Activated B cell treated with CpG ODN at 0.5 μM for 24 hours (primary cell): ENCODE measurements at regions of chr2 and their contacts with region 1.

Region 1: DNA sequence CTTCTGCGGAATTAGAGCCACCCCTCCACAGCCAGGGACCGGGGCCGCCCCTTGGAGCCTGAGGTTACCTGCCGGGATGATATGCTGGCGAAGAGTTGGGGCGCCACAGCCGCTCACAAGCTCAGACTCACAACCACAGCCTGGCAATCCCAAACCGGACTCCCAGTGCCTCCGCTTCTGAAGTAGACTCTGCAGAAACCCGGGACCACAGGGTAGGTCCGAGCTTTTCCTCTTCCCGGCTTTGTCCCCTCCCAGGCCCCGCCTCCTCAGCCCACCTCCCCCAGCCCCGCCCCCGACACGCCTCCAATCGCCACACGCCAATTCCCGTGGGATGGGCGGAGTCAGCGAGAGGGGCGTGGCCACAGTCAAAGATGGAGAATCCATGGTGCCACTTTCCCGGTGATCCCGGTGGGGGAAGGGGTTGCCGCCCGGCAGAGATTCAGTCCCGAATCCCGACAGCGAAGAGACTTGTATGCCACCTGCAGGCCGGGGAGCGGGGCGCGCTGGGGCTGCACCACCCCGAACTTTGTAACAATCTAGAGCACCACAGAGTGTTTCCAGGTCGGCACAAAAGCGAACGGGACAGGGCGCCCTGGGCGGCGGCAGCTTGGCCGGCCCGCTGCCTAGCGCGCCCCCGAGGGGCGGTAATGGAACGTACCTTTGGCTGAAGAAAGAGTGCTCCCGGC is at the start of gene IDH1:
- DNase-seq: peak; percentile 99
- ATAC-seq: peak; percentile 79
- H3K4me3 Mint-ChIP-seq: peak within 1 kb of the TSS; percentile 100
- H3K27ac Mint-ChIP-seq: peak within 1 kb of the TSS; percentile 88
- H3K4me1 Mint-ChIP-seq: peaks cover 48% of the 10 kb centered on the region
- H3K27me3 Mint-ChIP-seq: no peaks in the 10 kb centered on the region
- CTCF ChIP-seq: no peak
- total RNA-seq, gene IDH1: 36.9 and 46.6 TPM in 2 replicates

Region 2: DNA sequence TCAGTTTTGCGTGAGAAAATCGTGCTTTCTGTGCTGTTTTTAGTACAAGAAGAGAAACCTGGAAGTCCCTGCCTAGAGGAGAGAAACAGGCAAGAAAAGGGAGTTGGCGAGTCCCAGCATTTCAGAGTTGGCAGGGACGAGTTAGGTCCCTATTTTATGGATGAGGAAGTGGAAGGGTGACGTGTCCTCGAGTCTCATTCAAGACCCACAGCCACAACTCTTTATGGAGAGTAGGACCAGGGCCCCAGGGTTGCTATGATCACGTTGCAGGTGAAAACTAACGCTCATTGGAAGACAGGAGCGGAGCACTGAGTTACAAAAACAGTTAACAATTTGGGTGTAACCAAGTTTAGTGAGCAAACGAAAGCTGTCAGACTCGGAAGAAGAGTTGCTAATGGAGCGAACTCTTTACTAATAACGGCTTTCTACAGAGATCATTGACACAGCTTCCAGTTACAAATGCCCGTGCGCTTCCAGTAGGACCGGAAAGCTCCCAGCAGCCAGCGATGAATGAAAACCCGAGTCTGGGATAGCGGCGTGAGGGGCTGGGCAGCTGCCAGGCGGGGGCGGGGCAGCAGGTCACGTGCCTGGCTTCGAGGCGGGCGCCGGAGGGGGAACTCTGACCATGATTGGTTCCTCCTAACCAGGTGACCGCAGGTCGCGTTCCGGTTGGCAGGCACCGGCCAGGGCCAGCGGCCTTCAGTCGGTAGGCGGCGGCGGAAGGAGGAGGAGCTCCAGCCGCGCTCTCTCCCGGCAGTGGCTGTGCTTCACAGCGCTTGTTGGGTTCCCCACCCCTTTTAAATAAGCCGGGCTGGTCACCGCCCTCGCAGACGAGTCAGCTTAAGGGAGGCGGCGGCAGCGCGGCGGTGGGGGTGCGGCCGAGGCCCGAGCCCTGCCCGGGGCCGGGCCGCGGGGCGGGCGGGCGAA is 543.9 kb before region 1 on chr2 and contains the start of gene CCNYL1:
- CTCF ChIA-PET with region 1: no interaction called
- POLR2A ChIA-PET with region 1: no interaction called
- intact Hi-C with region 1: loop called (anchors 1 kb)
- DNase-seq: peak; percentile 92
- ATAC-seq: peak; percentile 95
- H3K4me3 Mint-ChIP-seq: peak within 1 kb of the TSS; percentile 95
- H3K27ac Mint-ChIP-seq: peak within 1 kb of the TSS; percentile 85
- H3K4me1 Mint-ChIP-seq: peaks cover 23% of the 10 kb centered on the region
- H3K27me3 Mint-ChIP-seq: no peaks in the 10 kb centered on the region
- CTCF ChIP-seq: no peak
- total RNA-seq, gene CCNYL1: 12.2 and 13.5 TPM in 2 replicates

Region 3: GRCh38 chr2:208175069-208175839 is 79.8 kb before region 1 on chr2:
- CTCF ChIA-PET with region 1: interaction called, 15 read pairs
- POLR2A ChIA-PET with region 1: no interaction called
- intact Hi-C with region 1: loop called (anchors 1 kb)
- DNase-seq: peak; percentile 19
- ATAC-seq: peak; percentile 94
- H3K4me3 Mint-ChIP-seq: no peak overlapping the region
- H3K27ac Mint-ChIP-seq: no peak overlapping the region
- H3K4me1 Mint-ChIP-seq: peaks cover 4% of the 10 kb centered on the region
- H3K27me3 Mint-ChIP-seq: peaks cover 14% of the 10 kb centered on the region
- CTCF ChIP-seq: peak; percentile 62

Region 4: GRCh38 chr2:208315081-208315788 is 60.2 kb after region 1 on chr2:
- CTCF ChIA-PET with region 1: interaction called, 20 read pairs
- POLR2A ChIA-PET with region 1: interaction called, 12 read pairs
- intact Hi-C with region 1: loop called (anchors 1 kb)
- DNase-seq: no peak
- ATAC-seq: peak; percentile 54
- H3K4me3 Mint-ChIP-seq: peak overlapping the region; percentile 89
- H3K27ac Mint-ChIP-seq: peak overlapping the region; percentile 93
- H3K4me1 Mint-ChIP-seq: peaks cover 77% of the 10 kb centered on the region
- H3K27me3 Mint-ChIP-seq: no peaks in the 10 kb centered on the region
- CTCF ChIP-seq: no peak

Region 5: DNA sequence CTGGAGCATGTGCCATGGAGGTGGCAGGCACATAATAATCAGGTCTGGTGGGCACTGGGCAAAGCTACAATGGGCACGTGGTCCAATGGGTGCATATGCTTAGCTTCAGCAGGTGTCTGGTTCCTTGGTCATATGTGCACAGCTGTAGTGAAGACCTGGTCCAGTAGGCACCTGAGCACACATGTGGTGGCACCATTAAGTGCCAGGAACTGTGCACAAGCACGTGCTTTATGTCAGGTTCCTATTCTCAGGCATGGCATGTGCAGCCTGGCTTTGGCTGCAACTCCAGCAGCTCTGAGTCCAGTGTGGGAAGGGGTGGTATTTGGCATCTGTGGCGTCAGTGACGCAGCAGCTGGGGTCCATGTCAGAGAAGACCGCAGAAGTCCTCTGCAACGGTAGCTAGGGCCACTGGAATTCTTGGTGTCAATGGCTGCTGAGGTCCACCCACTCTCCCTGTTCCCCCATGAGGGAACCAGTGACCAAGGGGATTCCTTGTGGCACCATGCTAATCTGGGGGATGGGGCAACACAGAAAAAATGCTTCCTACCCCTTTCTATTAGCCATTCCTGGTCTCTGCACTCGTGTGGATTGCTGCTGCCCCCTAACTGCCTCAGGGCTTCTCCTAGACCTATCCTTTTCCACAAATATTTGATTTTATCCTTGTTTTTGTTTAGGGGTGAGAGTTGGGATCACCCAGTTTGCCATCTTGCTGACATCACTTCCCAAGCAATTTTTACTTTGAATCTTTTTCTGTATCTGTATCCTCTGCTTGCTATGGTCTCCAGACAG is 906.0 kb after region 1 on chr2:
- CTCF ChIA-PET with region 1: no interaction called
- POLR2A ChIA-PET with region 1: no interaction called
- intact Hi-C with region 1: no loop called
- DNase-seq: no peak
- ATAC-seq: no peak
- H3K4me3 Mint-ChIP-seq: no peak overlapping the region
- H3K27ac Mint-ChIP-seq: no peak overlapping the region
- H3K4me1 Mint-ChIP-seq: no peaks in the 10 kb centered on the region
- H3K27me3 Mint-ChIP-seq: no peaks in the 10 kb centered on the region
- CTCF ChIP-seq: no peak

Region 6: GRCh38 chr2:209525834-209526281 is 1270.8 kb after region 1 on chr2:
- CTCF ChIA-PET with region 1: no interaction called
- POLR2A ChIA-PET with region 1: no interaction called
- intact Hi-C with region 1: loop called (anchors 10 kb)
- DNase-seq: no peak
- ATAC-seq: no peak
- H3K4me3 Mint-ChIP-seq: peak overlapping the region; percentile 69
- H3K27ac Mint-ChIP-seq: peak overlapping the region; percentile 78
- H3K4me1 Mint-ChIP-seq: peaks cover 50% of the 10 kb centered on the region
- H3K27me3 Mint-ChIP-seq: no peaks in the 10 kb centered on the region
- CTCF ChIP-seq: no peak